CD8-positive, alpha-beta T cell (primary cell): ENCODE measurements at regions of chr14 and their contacts with region 1.

Region 1: DNA sequence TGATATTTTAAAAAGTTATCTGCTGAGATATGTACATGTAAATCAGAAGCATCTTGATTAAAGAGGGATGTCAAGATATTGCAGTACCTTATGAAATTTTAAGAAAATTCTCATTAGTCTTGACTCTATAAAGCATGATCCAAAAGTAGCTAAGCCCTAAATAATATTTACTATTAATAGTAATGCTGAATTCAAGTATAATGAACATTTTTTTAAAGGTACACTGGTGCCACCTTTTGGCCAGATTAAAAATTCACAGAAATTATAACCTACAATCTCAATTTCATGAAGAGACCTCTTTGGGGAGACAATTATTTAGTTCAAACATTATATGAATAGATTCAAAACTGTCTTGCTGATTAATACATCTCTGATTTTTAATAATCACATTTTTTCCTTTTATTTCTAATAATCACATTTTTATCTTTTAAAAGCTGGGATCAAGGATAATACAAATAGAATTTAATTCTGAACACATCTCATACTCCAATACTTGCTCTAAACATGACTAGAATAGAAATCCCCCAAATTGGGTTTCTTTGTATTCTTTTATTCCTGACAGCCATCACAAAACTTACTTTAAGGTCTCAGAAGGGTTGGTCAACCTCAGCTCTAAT is 13.4 kb downstream of the AKAP5 start:
- DNase-seq: peak in 3 of 9 experiments; percentile 11 to 62 (median 55)
- ATAC-seq: no peak
- H3K4me3 ChIP-seq: no peak overlapping the region
- H3K4me3 Mint-ChIP-seq: no peak overlapping the region
- H3K27ac ChIP-seq: no peak overlapping the region
- H3K27ac Mint-ChIP-seq: no peak overlapping the region
- H3K4me1 ChIP-seq: no peaks in the 10 kb centered on the region
- H3K4me1 Mint-ChIP-seq: peaks cover 13% of the 10 kb centered on the region
- H3K27me3 ChIP-seq: no peaks in the 10 kb centered on the region
- H3K27me3 Mint-ChIP-seq: no peaks in the 10 kb centered on the region
- CTCF ChIP-seq: peak; percentile 72

Region 2: GRCh38 chr14:64345513-64345912 is 133.2 kb before region 1 on chr14:
- CTCF ChIA-PET with region 1: interaction called, 45 read pairs
- POLR2A ChIA-PET with region 1: no interaction called
- intact Hi-C with region 1: loop called (anchors 1 kb)
- DNase-seq: no peak
- ATAC-seq: no peak
- H3K4me3 ChIP-seq: no peak overlapping the region
- H3K4me3 Mint-ChIP-seq: no peak overlapping the region
- H3K27ac ChIP-seq: no peak overlapping the region
- H3K27ac Mint-ChIP-seq: no peak overlapping the region
- H3K4me1 ChIP-seq: no peaks in the 10 kb centered on the region
- H3K4me1 Mint-ChIP-seq: no peaks in the 10 kb centered on the region
- H3K27me3 ChIP-seq: no peaks in the 10 kb centered on the region
- H3K27me3 Mint-ChIP-seq: no peaks in the 10 kb centered on the region
- CTCF ChIP-seq: no peak

Region 3: GRCh38 chr14:64369201-64369600 is 109.5 kb before region 1 on chr14:
- CTCF ChIA-PET with region 1: no interaction called
- POLR2A ChIA-PET with region 1: no interaction called
- intact Hi-C with region 1: no loop called
- DNase-seq: no peak
- ATAC-seq: no peak
- H3K4me3 ChIP-seq: no peak overlapping the region
- H3K4me3 Mint-ChIP-seq: no peak overlapping the region
- H3K27ac ChIP-seq: no peak overlapping the region
- H3K27ac Mint-ChIP-seq: no peak overlapping the region
- H3K4me1 ChIP-seq: no peaks in the 10 kb centered on the region
- H3K4me1 Mint-ChIP-seq: no peaks in the 10 kb centered on the region
- H3K27me3 ChIP-seq: no peaks in the 10 kb centered on the region
- H3K27me3 Mint-ChIP-seq: no peaks in the 10 kb centered on the region
- CTCF ChIP-seq: no peak

Region 4: DNA sequence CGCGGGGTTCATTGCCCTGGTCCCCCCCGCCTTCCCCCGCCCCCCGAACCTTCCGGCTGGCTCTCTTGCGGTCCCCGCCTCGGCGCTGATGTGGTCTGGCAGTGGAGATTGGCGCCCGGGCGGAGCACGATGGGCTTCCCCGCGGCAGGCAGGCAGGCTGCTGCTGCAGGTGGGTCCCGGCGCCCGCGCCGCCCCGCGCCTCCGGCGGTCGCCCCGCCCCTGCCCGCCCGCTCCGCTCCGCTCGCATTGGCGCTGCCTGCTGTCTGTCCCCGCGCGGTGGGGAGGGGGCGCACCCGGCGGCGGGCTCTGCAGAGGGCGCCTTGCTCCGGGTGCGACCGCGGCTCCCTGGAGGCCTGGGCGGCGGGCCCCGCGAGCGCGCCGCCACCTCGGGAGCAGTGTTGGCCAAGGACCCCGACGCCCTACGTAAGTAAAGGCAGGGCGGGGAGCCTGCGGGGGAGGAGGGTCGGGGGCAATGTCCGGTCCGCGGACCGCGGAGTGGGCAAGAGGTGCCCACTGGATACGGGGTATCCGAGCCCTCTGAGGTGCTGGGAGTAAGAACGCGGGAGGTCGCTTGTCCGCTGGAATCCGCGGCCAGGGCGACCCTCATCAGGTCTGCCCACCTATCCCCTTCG is 13.4 kb before region 1 on chr14 and contains the start of gene AKAP5:
- CTCF ChIA-PET with region 1: interaction called, 10 read pairs
- POLR2A ChIA-PET with region 1: no interaction called
- intact Hi-C with region 1: no loop called
- DNase-seq: peak; percentile 17 to 84 (median 62)
- ATAC-seq: peak; percentile 93
- H3K4me3 ChIP-seq: peak within 1 kb of the TSS; percentile 45 to 59
- H3K4me3 Mint-ChIP-seq: peak within 1 kb of the TSS; percentile 89
- H3K27ac ChIP-seq: peak within 1 kb of the TSS; percentile 15 to 35
- H3K27ac Mint-ChIP-seq: peak within 1 kb of the TSS; percentile 68
- H3K4me1 ChIP-seq: peaks cover 24% of the 10 kb centered on the region
- H3K4me1 Mint-ChIP-seq: peaks cover 47% of the 10 kb centered on the region
- H3K27me3 ChIP-seq: no peaks in the 10 kb centered on the region
- H3K27me3 Mint-ChIP-seq: no peaks in the 10 kb centered on the region
- CTCF ChIP-seq: no peak
- total RNA-seq, gene AKAP5: 3.7 TPM

Region 5: GRCh38 chr14:64510825-64511671 is 32.3 kb after region 1 on chr14:
- CTCF ChIA-PET with region 1: interaction called, 45 read pairs
- POLR2A ChIA-PET with region 1: interaction called, 72 read pairs
- intact Hi-C with region 1: loop called (anchors 1 to 5 kb)
- DNase-seq: peak; percentile 25 to 87 (median 72)
- ATAC-seq: peak; percentile 60
- H3K4me3 ChIP-seq: no peak overlapping the region
- H3K4me3 Mint-ChIP-seq: peak overlapping the region; percentile 40
- H3K27ac ChIP-seq: peak overlapping the region in 1 of 2 experiments; percentile 52
- H3K27ac Mint-ChIP-seq: peak overlapping the region; percentile 42
- H3K4me1 ChIP-seq: peaks cover 62% of the 10 kb centered on the region
- H3K4me1 Mint-ChIP-seq: peaks cover 87% of the 10 kb centered on the region
- H3K27me3 ChIP-seq: no peaks in the 10 kb centered on the region
- H3K27me3 Mint-ChIP-seq: no peaks in the 10 kb centered on the region
- CTCF ChIP-seq: peak; percentile 87